ENCODE measurements at regions of chr17 and their contacts with region 1.

Region 1: GRCh38 chr17:34146440-34147043 is 108.5 kb upstream of the CCL2 start:
- DNase-seq: peak; percentile 17 to 55
- ATAC-seq: peak in 1 of 3 donors; percentile 69
- H3K4me3 ChIP-seq: no peak overlapping the region
- H3K4me3 Mint-ChIP-seq: no peak overlapping the region
- H3K27ac ChIP-seq: no peak overlapping the region
- H3K27ac Mint-ChIP-seq: no peak overlapping the region
- H3K4me1 ChIP-seq: no peaks in the 10 kb centered on the region
- H3K4me1 Mint-ChIP-seq: no peaks in the 10 kb centered on the region
- H3K27me3 ChIP-seq: no peaks in the 10 kb centered on the region
- H3K27me3 Mint-ChIP-seq: peaks cover 12 to 44% of the 10 kb centered on the region in 2 donors
- CTCF ChIP-seq: peak; percentile 29

Region 2: DNA sequence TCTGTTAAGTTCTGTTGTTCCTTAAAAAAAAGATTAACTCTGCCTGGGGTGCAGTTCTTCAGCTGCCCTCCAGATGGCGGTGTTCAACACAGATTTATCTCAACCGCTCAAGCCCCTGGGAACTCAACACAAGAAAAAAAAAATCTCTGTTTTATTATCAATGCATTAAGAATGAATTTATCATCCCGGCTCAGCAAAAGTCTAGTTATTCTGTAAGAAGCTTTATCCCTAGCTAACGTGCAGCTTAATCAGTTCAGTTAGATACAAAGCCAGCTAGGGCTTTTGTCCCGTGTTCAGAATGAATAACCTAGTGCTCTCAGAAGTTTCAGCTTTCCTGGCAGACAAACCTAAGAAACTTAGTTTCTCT is 367.3 kb before region 1 on chr17:
- intact Hi-C with region 1: loop called (anchors 5 kb)
- DNase-seq: peak; percentile 20 to 64
- ATAC-seq: peak in 2 of 3 donors; percentile 60 to 74
- H3K4me3 ChIP-seq: no peak overlapping the region
- H3K4me3 Mint-ChIP-seq: no peak overlapping the region
- H3K27ac ChIP-seq: no peak overlapping the region
- H3K27ac Mint-ChIP-seq: no peak overlapping the region
- H3K4me1 ChIP-seq: no peaks in the 10 kb centered on the region
- H3K4me1 Mint-ChIP-seq: no peaks in the 10 kb centered on the region
- H3K27me3 ChIP-seq: no peaks in the 10 kb centered on the region
- H3K27me3 Mint-ChIP-seq: peaks cover 7 to 21% of the 10 kb centered on the region in 2 donors
- CTCF ChIP-seq: peak; percentile 94

Region 3: GRCh38 chr17:33927732-33928133 is 218.8 kb before region 1 on chr17:
- intact Hi-C with region 1: loop called (anchors 5 kb)
- DNase-seq: peak in 1 of 2 donors; percentile 5
- ATAC-seq: no peak
- H3K4me3 ChIP-seq: no peak overlapping the region
- H3K4me3 Mint-ChIP-seq: no peak overlapping the region
- H3K27ac ChIP-seq: no peak overlapping the region
- H3K27ac Mint-ChIP-seq: no peak overlapping the region
- H3K4me1 ChIP-seq: no peaks in the 10 kb centered on the region
- H3K4me1 Mint-ChIP-seq: no peaks in the 10 kb centered on the region
- H3K27me3 ChIP-seq: no peaks in the 10 kb centered on the region
- H3K27me3 Mint-ChIP-seq: peaks cover 0 to 6% of the 10 kb centered on the region in 2 donors
- CTCF ChIP-seq: no peak

Region 4: DNA sequence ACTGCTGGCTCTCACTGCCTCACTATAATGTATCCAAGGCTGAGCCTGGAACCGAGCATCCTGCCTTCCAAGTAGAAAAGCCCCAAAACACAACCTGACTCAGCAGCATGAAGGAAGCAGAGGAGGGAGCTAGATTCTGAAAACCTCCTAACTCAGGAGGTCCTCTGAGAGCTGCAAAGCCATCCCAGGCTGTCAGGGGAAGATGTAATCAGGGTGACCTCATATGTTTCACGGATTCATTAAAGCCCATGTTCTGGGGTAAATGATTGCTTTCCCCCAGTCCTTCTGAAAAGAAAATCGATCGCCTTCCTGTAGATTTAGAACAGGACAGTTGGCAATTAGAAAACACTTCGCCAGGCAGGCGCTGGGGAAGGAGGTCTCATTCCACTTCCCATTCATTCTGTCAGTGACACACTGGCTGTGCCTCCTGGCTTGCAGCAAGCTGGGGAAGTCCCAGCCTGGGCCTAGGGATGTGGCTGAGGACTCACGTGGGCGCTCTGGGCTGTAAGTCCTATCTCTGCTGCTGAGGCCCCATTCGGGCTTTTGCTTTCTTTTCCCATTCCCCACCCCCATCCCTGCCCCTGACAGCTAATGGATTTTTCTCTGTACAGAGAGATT is 357.1 kb after region 1 on chr17:
- intact Hi-C with region 1: no loop called
- DNase-seq: no peak
- ATAC-seq: no peak
- H3K4me3 ChIP-seq: no peak overlapping the region
- H3K4me3 Mint-ChIP-seq: no peak overlapping the region
- H3K27ac ChIP-seq: no peak overlapping the region
- H3K27ac Mint-ChIP-seq: no peak overlapping the region
- H3K4me1 ChIP-seq: no peaks in the 10 kb centered on the region
- H3K4me1 Mint-ChIP-seq: no peaks in the 10 kb centered on the region
- H3K27me3 ChIP-seq: no peaks in the 10 kb centered on the region
- H3K27me3 Mint-ChIP-seq: peaks cover 16 to 24% of the 10 kb centered on the region in 2 donors
- CTCF ChIP-seq: no peak

Measured in natural killer cell (primary cell).